ENCODE measurements at regions of chr9 and their contacts with region 1.

Region 1: DNA sequence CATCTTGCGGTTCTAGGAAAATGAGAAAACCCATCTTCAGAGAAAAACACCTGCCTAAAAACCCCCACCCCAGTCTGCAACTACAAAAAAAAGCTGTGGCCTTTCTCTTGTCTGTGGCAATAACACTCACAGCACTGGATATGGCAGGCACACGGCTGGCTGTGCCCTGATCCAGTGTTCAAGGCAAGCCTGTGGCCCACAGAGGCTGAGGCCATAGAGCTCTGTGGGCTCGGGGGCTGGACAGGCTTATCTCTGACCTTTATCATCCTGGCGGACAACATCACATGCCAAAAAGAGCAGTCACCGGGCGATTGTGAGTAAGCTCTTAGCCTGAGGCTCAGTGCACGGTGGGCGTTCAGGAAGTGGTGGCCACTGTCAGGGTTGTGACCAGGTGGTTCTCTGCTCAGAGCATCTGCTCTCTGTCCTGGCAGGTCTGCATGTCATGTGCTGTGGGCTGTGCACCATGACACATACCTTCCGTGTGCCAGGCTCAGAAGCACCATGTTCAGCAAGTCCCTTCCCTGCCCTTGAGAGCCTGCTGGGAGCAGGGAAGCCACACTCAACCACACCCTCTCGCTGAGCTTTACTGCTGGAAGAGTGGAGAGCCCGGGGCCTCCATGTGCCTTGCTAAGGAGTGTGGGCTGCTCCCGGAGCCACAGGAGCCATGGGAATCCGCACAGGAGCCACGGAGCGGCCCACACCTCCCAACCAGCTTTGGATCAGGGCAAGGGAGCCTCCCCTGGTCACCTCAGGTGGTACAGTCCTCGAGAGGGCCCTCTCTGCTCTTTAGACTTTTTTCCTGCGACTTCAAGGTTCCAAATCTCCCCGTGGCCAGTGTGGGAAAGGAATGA is 34.6 kb upstream of the WDR38 start:
- DNase-seq: no peak
- ATAC-seq: peak; percentile 86
- H3K4me3 ChIP-seq: no peak overlapping the region
- H3K27ac ChIP-seq: no peak overlapping the region
- H3K4me1 ChIP-seq: peaks cover 13% of the 10 kb centered on the region
- H3K27me3 ChIP-seq: no peaks in the 10 kb centered on the region
- CTCF ChIP-seq: no peak

Region 2: GRCh38 chr9:124684169-124684568 is 134.5 kb before region 1 on chr9:
- CTCF ChIA-PET with region 1: no interaction called
- POLR2A ChIA-PET with region 1: interaction called, 10 read pairs
- in situ Hi-C with region 1: no loop called
- intact Hi-C with region 1: no loop called
- DNase-seq: no peak
- ATAC-seq: no peak
- H3K4me3 ChIP-seq: no peak overlapping the region
- H3K27ac ChIP-seq: no peak overlapping the region
- H3K4me1 ChIP-seq: no peaks in the 10 kb centered on the region
- H3K27me3 ChIP-seq: no peaks in the 10 kb centered on the region
- CTCF ChIP-seq: no peak

Region 3: GRCh38 chr9:124735121-124735520 is 83.5 kb before region 1 on chr9:
- CTCF ChIA-PET with region 1: no interaction called
- POLR2A ChIA-PET with region 1: no interaction called
- in situ Hi-C with region 1: no loop called
- intact Hi-C with region 1: no loop called
- DNase-seq: no peak
- ATAC-seq: peak; percentile 66
- H3K4me3 ChIP-seq: no peak overlapping the region
- H3K27ac ChIP-seq: peak overlapping the region; percentile 2; the same call in 1 of the 2 replicates
- H3K4me1 ChIP-seq: peaks cover 33% of the 10 kb centered on the region
- H3K27me3 ChIP-seq: no peaks in the 10 kb centered on the region
- CTCF ChIP-seq: no peak

Region 4: DNA sequence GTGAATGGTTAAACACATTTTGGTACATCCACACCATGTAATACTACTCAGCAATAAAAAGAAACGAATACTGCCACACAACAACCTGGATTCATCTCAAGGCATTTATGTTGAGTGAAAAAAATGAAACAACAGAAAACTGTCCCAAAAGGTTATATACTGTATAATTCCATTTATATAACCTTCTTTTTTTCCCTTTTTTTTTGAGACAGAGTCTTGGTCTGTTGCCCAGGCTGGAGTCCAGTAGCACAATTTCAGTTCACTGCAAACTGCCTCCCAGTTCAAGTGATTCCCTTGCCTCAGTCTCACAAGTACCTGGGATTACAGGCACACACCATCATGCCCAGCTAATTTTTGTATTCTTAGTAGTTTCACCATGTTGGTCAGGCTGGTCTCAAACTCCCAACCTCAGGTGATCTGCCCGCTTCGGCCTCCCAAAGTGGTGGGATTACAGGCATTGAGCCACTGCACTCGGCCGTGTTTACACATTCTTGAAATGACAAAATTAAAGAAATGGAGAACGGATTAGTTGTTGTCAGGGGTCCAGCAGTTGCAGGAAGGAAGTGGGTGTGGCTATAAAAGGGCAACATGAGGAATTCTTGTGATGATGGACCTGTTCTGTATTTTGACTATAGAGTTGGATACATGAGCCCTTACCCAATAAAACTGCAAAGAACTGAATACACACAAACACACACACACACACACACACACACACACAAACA is 353.5 kb after region 1 on chr9:
- CTCF ChIA-PET with region 1: no interaction called
- POLR2A ChIA-PET with region 1: interaction called, 13 read pairs
- in situ Hi-C with region 1: no loop called
- intact Hi-C with region 1: no loop called
- DNase-seq: no peak
- ATAC-seq: no peak
- H3K4me3 ChIP-seq: no peak overlapping the region
- H3K27ac ChIP-seq: no peak overlapping the region
- H3K4me1 ChIP-seq: no peaks in the 10 kb centered on the region
- H3K27me3 ChIP-seq: no peaks in the 10 kb centered on the region
- CTCF ChIP-seq: no peak